ENCODE measurements at regions of chr17 and their contacts with region 1.

Region 1: DNA sequence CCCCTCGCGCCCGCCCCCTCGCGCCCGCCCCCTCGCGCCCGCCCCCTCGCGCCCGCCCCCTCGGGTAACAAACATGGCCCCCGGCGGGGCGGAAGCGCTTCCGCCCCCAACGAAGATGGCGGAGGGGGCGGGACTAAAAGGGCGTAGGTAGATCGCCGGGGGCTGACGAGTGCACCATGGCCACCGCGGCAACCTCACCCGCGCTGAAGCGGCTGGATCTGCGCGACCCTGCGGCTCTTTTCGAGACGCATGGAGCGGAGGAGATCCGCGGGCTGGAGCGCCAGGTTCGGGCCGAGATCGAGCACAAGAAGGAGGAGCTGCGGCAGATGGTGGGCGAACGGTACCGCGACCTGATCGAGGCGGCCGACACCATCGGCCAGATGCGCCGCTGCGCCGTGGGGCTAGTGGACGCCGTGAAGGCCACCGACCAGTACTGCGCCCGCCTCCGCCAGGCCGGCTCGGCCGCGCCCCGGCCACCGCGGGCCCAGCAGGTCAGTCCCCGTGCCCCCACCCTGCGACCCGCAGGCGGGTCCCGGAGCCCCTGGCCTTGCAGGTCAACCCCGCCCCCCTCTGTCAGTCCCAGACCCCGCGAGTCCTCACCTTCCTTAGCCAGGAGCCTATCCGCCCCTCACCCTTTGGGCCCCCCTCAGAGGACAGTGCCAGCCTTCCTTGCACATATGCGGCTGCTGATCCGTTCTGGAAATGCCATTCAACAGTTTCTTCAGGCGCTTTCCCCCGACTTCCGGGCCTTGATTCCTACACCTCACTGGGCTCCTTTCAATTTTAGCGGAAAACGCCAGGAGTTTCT is at the start of gene COG1:
- DNase-seq: peak; percentile 97
- H3K4me3 ChIP-seq: peak within 1 kb of the TSS; percentile 78
- H3K27ac ChIP-seq: peak within 1 kb of the TSS; percentile 83
- H3K4me1 ChIP-seq: peaks cover 17% of the 10 kb centered on the region
- CTCF ChIP-seq: no peak
- total RNA-seq, gene COG1: 19.8 and 38.3 TPM in 2 replicates

Region 2: GRCh38 chr17:72602517-72603419 is 590.3 kb before region 1 on chr17:
- CTCF ChIA-PET with region 1: no interaction called
- POLR2A ChIA-PET with region 1: no interaction called
- intact Hi-C with region 1: no loop called
- DNase-seq: peak; percentile 19
- H3K4me3 ChIP-seq: no peak overlapping the region
- H3K27ac ChIP-seq: no peak overlapping the region
- H3K4me1 ChIP-seq: peaks cover 9% of the 10 kb centered on the region
- CTCF ChIP-seq: no peak

Region 3: DNA sequence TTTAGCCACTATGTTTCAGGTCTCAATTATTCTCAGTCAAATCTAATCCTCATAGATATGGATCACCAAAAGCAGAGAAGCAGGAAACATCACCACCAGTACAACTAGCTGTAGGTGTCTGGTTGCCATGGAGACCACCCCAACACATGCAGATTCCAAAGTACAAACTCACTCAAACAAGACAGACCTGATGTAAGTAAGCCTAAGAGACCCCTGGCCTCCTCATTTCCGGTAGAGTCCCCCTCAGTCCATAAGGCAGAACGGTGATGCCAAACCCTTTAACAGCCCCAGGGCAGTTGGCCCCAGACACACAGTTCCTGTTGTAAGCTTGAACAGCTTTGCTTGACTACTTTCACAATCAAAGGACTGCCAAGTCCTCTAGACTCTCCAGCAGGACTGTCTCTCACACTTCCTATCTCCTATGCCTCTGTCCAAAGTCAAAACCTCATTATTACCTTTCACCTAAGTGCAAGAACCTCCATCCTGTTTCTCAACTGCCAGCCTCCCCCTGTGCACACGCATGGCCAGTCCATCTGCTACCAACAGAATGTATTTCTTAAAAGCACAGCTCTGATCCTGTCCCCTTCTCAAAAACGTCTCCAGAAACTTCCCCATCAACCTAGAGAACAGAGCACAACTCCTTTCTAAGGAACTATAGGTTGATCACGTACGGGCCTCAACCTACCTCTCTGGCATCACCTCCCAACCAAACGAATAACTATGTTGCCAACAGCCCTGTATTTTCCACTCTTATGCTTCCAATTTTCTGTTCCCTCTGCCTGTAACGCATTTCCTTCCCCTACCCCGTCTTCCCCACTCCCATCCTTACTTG is 124.6 kb before region 1 on chr17:
- CTCF ChIA-PET with region 1: no interaction called
- POLR2A ChIA-PET with region 1: no interaction called
- intact Hi-C with region 1: no loop called
- DNase-seq: no peak
- H3K4me3 ChIP-seq: no peak overlapping the region
- H3K27ac ChIP-seq: no peak overlapping the region
- H3K4me1 ChIP-seq: no peaks in the 10 kb centered on the region
- CTCF ChIP-seq: no peak

Region 4: GRCh38 chr17:73092523-73093135 is 100.5 kb before region 1 on chr17 and contains the start of gene SLC39A11:
- CTCF ChIA-PET with region 1: no interaction called
- POLR2A ChIA-PET with region 1: no interaction called
- intact Hi-C with region 1: loop called (anchors 2 kb)
- DNase-seq: peak; percentile 97
- H3K4me3 ChIP-seq: peak within 1 kb of the TSS; percentile 83
- H3K27ac ChIP-seq: no peak within 1 kb of the TSS
- H3K4me1 ChIP-seq: peaks cover 24% of the 10 kb centered on the region
- CTCF ChIP-seq: no peak
- total RNA-seq, gene SLC39A11: 22.7 and 25.6 TPM in 2 replicates

Region 5: DNA sequence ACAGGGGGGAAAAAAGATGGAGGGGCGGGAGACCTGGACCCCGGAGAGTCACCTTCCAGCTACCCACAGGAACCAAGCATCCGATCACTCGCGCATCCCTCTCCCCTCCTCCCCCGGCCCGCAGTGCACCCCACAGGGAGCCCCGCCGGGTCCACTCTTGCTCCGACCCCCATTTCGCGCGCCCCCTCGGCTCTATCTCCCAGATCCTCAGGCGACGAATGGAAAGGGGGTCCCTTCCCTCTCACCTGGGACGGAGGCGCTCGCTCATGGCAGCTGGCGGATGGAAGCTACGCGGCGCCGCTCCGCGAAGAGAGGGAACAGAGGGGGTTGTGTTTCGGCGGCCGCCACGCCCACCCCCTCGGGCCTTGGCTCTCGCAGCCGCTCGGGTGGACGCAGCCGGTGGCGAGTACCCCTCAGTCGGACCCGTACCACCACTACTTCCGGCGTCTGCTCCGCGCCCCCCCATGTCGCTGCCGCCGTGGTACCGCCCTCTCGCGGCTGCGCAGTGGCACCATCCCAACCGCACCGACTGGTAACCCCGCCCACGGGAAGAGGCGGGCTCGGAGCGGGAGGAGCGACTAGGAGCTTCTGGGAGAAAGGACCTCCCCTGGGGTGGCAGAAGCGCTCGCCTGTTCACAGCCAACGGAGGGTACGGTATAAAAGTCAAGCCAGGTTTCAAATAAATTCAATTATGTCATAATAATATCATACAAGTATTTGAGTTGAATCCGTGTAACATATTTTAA is 38.9 kb after region 1 on chr17:
- CTCF ChIA-PET with region 1: no interaction called
- POLR2A ChIA-PET with region 1: interaction called, 19 read pairs
- intact Hi-C with region 1: loop called (anchors 1 kb)
- DNase-seq: peak; percentile 99
- H3K4me3 ChIP-seq: peak overlapping the region; percentile 83
- H3K27ac ChIP-seq: peak overlapping the region; percentile 43
- H3K4me1 ChIP-seq: peaks cover 51% of the 10 kb centered on the region
- CTCF ChIP-seq: no peak

Region 6: DNA sequence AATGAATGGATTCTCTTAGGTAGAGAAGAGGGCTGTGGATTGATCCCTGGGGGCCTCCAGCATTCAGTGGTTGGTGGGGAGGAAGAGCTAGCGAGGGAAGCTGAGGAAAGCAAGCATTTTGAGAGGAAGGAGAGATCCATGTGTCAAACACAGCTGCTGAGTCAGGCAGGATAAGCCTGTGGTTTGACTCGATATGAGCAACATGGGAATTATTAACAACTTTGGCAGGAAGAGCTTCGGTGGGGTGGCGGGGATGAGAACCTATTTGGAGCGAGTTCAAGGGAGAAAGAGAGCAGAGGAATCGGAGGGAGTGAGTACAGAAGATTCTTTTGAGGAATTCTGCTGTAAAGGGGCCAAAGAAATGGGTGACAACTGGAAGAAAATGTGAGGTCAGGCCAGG is 178.2 kb after region 1 on chr17:
- CTCF ChIA-PET with region 1: no interaction called
- POLR2A ChIA-PET with region 1: interaction called, 3 read pairs
- intact Hi-C with region 1: loop called (anchors 1 kb)
- DNase-seq: no peak
- H3K4me3 ChIP-seq: no peak overlapping the region
- H3K27ac ChIP-seq: no peak overlapping the region
- H3K4me1 ChIP-seq: no peaks in the 10 kb centered on the region
- CTCF ChIP-seq: no peak